Left colon (tissue), 2 donors: ENCODE measurements at regions of chr5 and their contacts with region 1.

Region 1: GRCh38 chr5:164504141-164504772 is 998.8 kb downstream of the MAT2B start:
- DNase-seq: peak in 1 of 2 donors; percentile 27
- ATAC-seq: peak; percentile 34

Region 2: GRCh38 chr5:163564321-163564938 is 939.8 kb before region 1 on chr5:
- intact Hi-C with region 1: loop called (anchors 5 to 10 kb)
- DNase-seq: peak; percentile 27 to 56
- ATAC-seq: peak; percentile 61

Region 3: GRCh38 chr5:163695830-163696578 is 808.3 kb before region 1 on chr5:
- intact Hi-C with region 1: loop called in 1 of 2 experiments (anchors 10 kb)
- DNase-seq: peak; percentile 25 to 27
- ATAC-seq: peak; percentile 98

Region 4: GRCh38 chr5:164013077-164013670 is 491.1 kb before region 1 on chr5:
- intact Hi-C with region 1: loop called in 1 of 2 experiments (anchors 10 kb)
- DNase-seq: peak in 1 of 2 donors; percentile 53
- ATAC-seq: peak; percentile 57

Region 5: GRCh38 chr5:164573397-164573796 is 69.1 kb after region 1 on chr5:
- intact Hi-C with region 1: no loop called
- DNase-seq: no peak
- ATAC-seq: no peak